Mammary epithelial cell (primary cell): ENCODE measurements at regions of chr5 and their contacts with region 1.

Region 1: DNA sequence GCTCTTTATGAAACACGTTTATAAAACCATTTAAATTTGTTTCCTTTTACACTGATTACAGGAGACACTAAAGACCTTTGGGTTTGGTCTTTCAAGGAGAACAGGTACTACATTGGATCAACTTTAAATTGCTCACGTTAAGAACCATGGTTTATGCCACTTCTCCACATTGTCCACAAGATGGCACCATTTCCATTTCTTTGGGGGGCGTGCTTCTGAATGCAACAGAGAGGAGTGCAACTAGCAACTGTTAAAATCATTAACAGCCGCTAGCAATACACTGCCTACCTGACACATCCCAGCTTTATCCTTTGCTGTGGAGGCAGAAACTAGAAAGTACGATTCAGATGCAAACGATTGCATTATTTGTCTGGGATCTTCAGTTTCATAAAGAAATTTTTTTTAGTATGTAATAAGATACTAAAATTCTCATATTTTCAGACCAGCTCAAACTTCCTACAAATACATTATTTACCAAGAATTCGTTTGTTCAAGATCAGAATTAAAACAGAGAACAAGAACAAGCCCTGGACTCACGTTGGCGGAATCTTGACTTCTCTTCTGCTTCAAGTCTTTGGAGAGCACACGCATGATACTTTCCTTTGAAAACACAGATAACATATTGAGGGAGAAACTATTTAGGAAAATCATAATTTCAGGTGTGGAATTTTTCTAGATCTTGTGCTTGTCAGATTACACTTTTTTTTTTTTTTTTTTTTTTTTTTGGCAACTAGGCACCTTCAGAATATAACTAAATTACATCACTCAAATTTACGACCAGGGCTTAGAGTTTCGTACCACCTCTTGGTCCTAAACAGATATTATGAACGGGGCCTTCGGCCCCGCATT is 702 bp downstream of the CDC20B start:
- DNase-seq: peak; percentile 81
- H3K4me3 ChIP-seq: peak overlapping the region; percentile 55 to 81 (median 62)
- H3K27ac ChIP-seq: peak overlapping the region; percentile 35
- H3K4me1 ChIP-seq: peaks cover 31% of the 10 kb centered on the region
- H3K27me3 ChIP-seq: no peaks in the 10 kb centered on the region
- CTCF ChIP-seq: peak; percentile 81

Region 2: DNA sequence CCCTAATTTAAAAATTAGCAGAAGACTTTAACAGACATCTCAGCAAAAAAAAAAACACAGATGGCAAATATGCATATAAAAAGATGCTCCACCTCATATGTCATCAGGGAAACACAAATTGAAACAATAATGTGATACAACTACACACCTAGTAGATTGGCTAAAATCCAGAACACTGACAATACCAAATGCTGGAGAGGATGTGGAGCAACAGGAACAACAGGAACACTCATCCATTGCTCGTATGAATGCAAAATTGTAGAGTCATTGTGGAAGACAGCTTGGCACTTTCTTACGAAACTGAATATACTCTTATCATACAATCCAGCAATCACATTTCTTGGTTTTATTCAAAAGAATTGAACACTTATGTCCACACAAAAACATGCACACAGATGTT is 32.7 kb after region 1 on chr5:
- CTCF ChIA-PET with region 1: no interaction called
- dilution Hi-C with region 1: no loop called
- in situ Hi-C with region 1: no loop called
- intact Hi-C with region 1: no loop called
- DNase-seq: peak; percentile 54
- H3K4me3 ChIP-seq: no peak overlapping the region
- H3K27ac ChIP-seq: no peak overlapping the region
- H3K4me1 ChIP-seq: no peaks in the 10 kb centered on the region
- H3K27me3 ChIP-seq: no peaks in the 10 kb centered on the region
- CTCF ChIP-seq: no peak

Region 3: GRCh38 chr5:55232985-55233928 is 61.0 kb after region 1 on chr5 and contains the start of gene CCNO:
- CTCF ChIA-PET with region 1: no interaction called
- dilution Hi-C with region 1: loop called (anchors 5 kb)
- in situ Hi-C with region 1: loop called (anchors 5 to 10 kb)
- intact Hi-C with region 1: loop called (anchors 1 kb)
- DNase-seq: peak; percentile 90
- H3K4me3 ChIP-seq: peak within 1 kb of the TSS; percentile 63 to 79 (median 74)
- H3K27ac ChIP-seq: peak within 1 kb of the TSS; percentile 44
- H3K4me1 ChIP-seq: peaks cover 14% of the 10 kb centered on the region
- H3K27me3 ChIP-seq: no peaks in the 10 kb centered on the region
- CTCF ChIP-seq: peak in 1 of 2 donors; percentile 31
- total RNA-seq, gene CCNO: 2.7 to 8.8 TPM

Region 4: GRCh38 chr5:55307383-55308253 is 135.3 kb after region 1 on chr5 and contains the starts of genes DHX29 and MTREX:
- CTCF ChIA-PET with region 1: no interaction called
- dilution Hi-C with region 1: no loop called
- in situ Hi-C with region 1: no loop called
- intact Hi-C with region 1: loop called (anchors 10 kb)
- DNase-seq: peak; percentile 91
- H3K4me3 ChIP-seq: peak within 1 kb of the TSS; percentile 69 to 89 (median 77)
- H3K27ac ChIP-seq: peak within 1 kb of the TSS; percentile 89
- H3K4me1 ChIP-seq: peaks cover 24% of the 10 kb centered on the region
- H3K27me3 ChIP-seq: no peaks in the 10 kb centered on the region
- CTCF ChIP-seq: no peak
- total RNA-seq, gene DHX29: 21.3 to 26.3 TPM
- total RNA-seq, gene MTREX: 46.0 to 76.1 TPM

Region 5: GRCh38 chr5:55324815-55325418 is 152.6 kb after region 1 on chr5:
- CTCF ChIA-PET with region 1: no interaction called
- dilution Hi-C with region 1: no loop called
- in situ Hi-C with region 1: no loop called
- intact Hi-C with region 1: loop called (anchors 1 kb)
- DNase-seq: peak; percentile 26
- H3K4me3 ChIP-seq: no peak overlapping the region
- H3K27ac ChIP-seq: no peak overlapping the region
- H3K4me1 ChIP-seq: no peaks in the 10 kb centered on the region
- H3K27me3 ChIP-seq: no peaks in the 10 kb centered on the region
- CTCF ChIP-seq: peak; percentile 56 to 66

Region 6: GRCh38 chr5:55407059-55407684 is 234.9 kb after region 1 on chr5:
- CTCF ChIA-PET with region 1: no interaction called
- dilution Hi-C with region 1: no loop called
- in situ Hi-C with region 1: no loop called
- intact Hi-C with region 1: loop called (anchors 5 kb)
- DNase-seq: peak; percentile 23
- H3K4me3 ChIP-seq: no peak overlapping the region
- H3K27ac ChIP-seq: no peak overlapping the region
- H3K4me1 ChIP-seq: no peaks in the 10 kb centered on the region
- H3K27me3 ChIP-seq: no peaks in the 10 kb centered on the region
- CTCF ChIP-seq: peak; percentile 68 to 76